B cell (primary cell): ENCODE measurements at regions of chr9 and their contacts with region 1.

Region 1: DNA sequence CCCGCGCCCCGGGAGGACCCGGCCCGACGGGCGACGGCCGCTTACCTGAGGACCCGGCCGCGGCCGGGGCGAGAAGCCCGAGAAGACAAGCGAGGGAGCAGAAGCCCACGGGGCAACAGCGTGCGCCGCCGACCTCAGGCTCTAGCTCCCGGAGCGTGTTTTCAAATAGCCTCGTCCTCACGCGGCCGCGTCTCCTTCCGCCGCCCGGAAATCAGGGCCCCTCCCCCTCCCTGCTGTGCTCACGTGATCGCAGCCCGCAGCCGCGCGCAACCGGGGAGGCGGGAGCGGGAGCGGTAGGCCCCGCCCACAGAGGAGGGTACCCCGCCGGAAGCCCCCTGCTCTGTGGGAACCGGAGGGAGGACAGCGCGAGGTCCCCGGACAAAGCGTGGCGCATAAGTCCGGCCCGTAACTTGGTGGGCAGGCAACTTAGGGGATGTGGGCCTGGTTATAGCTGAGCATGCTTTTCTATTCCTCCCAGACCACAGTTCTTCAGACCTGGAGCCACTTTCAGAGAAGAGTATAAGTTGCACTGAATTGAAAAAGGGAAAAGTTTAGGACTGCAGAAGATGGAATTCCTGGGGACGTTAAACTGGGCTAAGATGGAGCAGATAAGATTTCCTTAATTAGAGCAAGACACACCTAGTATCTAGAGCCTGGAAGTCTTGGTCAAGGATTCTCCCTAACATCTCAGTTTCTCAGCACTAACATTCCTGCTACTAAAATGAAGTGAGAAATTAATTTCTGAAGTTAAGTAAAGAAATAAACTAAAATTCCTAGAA is at the start of gene TEX10:
- DNase-seq: peak; percentile 93
- ATAC-seq: peak; percentile 93
- H3K4me3 ChIP-seq: peak within 1 kb of the TSS; percentile 53 to 94 (median 92)
- H3K4me3 Mint-ChIP-seq: peak within 1 kb of the TSS; percentile 93
- H3K27ac ChIP-seq: peak within 1 kb of the TSS; percentile 58 to 90
- H3K27ac Mint-ChIP-seq: peak within 1 kb of the TSS; percentile 83
- H3K4me1 ChIP-seq: peaks cover 35% of the 10 kb centered on the region in 2 donors
- H3K4me1 Mint-ChIP-seq: peaks cover 69% of the 10 kb centered on the region
- H3K27me3 ChIP-seq: no peaks in the 10 kb centered on the region
- H3K27me3 Mint-ChIP-seq: no peaks in the 10 kb centered on the region
- CTCF ChIP-seq: no peak
- total RNA-seq, gene TEX10: 24.9 and 27.6 TPM in 2 replicates

Region 2: DNA sequence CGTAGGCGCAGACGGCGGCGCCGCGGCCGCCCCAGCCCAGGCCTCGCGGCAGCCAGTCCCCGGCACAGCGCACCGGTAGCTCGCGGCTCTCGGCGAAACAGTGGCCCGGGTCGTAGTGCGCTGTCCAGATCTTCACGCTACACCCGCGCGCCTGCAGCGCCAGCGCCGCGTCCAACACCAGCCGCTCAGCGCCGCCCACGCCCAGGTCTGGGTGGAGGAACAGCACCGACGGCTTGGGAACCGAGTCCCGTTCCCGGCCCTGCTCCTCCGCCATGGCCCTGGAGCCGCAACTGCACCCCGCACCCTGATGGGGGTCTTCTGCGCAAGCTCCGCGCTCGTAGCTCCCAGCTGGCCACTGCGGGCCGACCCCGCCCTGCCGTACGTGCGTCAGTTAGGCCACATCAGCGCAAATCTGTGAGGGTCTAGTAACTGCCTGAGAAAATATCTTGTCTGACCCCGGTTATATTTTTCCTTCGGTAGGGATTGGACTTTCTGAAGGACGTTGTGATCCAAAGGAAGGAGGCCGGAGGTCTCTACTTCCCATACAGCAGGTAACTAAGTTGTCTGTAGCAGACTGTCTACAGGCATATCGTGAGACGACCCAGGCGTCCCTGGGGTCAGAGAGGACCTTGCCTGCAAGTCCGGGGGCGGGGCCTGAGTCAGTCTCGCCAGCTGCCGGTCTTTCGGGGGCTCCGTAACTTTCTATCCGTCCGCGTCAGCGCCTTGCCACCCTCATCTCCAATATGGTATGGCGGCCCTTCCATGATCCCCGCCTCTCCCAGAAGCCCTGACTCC is 1131.1 kb before region 1 on chr9 and contains the starts of genes ALG2 and SEC61B:
- CTCF ChIA-PET with region 1: no interaction called
- POLR2A ChIA-PET with region 1: no interaction called
- intact Hi-C with region 1: loop called (anchors 5 kb)
- DNase-seq: peak; percentile 98
- ATAC-seq: peak; percentile 89
- H3K4me3 ChIP-seq: peak within 1 kb of the TSS; percentile 88 to 96 (median 90)
- H3K4me3 Mint-ChIP-seq: peak within 1 kb of the TSS; percentile 95
- H3K27ac ChIP-seq: peak within 1 kb of the TSS; percentile 98 to 99
- H3K27ac Mint-ChIP-seq: peak within 1 kb of the TSS; percentile 100
- H3K4me1 ChIP-seq: peaks cover 30 to 43% of the 10 kb centered on the region in 2 donors
- H3K4me1 Mint-ChIP-seq: peaks cover 77% of the 10 kb centered on the region
- H3K27me3 ChIP-seq: no peaks in the 10 kb centered on the region
- H3K27me3 Mint-ChIP-seq: no peaks in the 10 kb centered on the region
- CTCF ChIP-seq: no peak
- total RNA-seq, gene ALG2: 42.6 and 46.3 TPM in 2 replicates
- total RNA-seq, gene SEC61B: 70.2 and 78.2 TPM in 2 replicates

Region 3: GRCh38 chr9:100411472-100412283 is 58.8 kb after region 1 on chr9:
- CTCF ChIA-PET with region 1: no interaction called
- POLR2A ChIA-PET with region 1: no interaction called
- intact Hi-C with region 1: loop called (anchors 1 kb)
- DNase-seq: peak; percentile 88
- ATAC-seq: peak; percentile 99
- H3K4me3 ChIP-seq: peak overlapping the region; percentile 62 to 79 (median 75)
- H3K4me3 Mint-ChIP-seq: peak overlapping the region; percentile 85
- H3K27ac ChIP-seq: no peak overlapping the region
- H3K27ac Mint-ChIP-seq: peak overlapping the region; percentile 57
- H3K4me1 ChIP-seq: peaks cover 8 to 12% of the 10 kb centered on the region in 2 donors
- H3K4me1 Mint-ChIP-seq: peaks cover 14% of the 10 kb centered on the region
- H3K27me3 ChIP-seq: peaks cover 0 to 9% (median 3%) of the 10 kb centered on the region in 4 experiments
- H3K27me3 Mint-ChIP-seq: peaks cover 20% of the 10 kb centered on the region
- CTCF ChIP-seq: no peak

Region 4: DNA sequence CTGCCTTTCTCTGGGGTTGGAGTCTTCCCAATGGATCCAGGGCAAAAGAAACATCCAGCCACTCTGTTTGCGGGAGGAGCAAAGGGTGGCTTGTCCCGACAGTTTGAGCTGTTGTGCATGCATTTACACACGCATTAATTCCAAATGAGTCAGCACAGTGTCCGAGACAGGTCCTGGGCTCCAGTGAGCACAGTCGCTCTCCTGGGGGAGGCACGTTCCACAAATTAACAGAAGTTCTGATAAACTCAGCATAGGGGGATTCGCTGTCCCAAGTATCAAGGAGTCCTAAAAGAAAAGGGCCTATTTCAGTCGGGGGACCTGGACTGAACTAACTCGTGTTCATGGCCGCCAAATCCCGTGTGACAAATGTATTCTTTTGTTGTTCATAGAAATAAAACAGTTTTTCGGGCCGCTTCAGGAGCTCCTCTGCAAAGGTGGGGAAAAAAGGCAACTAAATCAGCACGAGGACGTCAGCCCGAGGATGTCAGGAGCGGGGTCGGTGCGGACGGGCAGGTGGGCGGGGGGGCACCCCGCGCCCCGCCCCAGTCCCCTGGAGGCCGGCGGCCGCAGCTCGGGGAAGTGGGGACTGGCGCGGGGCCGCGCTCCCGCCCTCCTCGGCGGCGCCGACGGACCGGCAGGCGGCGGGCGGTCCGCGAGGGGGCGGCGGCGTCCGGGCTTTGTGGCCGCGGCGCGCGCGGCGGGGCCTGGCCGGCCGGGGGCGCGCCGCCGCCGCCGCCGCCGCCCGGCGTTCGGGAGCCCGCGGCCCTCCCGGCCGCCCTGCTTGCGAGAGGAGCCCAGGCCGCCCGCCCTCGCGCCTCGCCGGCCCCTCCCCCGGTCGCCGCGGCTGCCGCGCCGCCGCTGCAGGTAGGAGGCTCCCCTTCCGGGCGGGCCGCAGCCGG is 73.9 kb after region 1 on chr9 and contains the start of gene MSANTD3:
- CTCF ChIA-PET with region 1: interaction called, 3 read pairs
- POLR2A ChIA-PET with region 1: no interaction called
- intact Hi-C with region 1: loop called (anchors 1 kb)
- DNase-seq: peak; percentile 75
- ATAC-seq: peak; percentile 90
- H3K4me3 ChIP-seq: peak within 1 kb of the TSS; percentile 40 to 77 (median 70)
- H3K4me3 Mint-ChIP-seq: peak within 1 kb of the TSS; percentile 95
- H3K27ac ChIP-seq: peak within 1 kb of the TSS in 1 of 2 donors; percentile 59
- H3K27ac Mint-ChIP-seq: peak within 1 kb of the TSS; percentile 93
- H3K4me1 ChIP-seq: peaks cover 13 to 16% of the 10 kb centered on the region in 2 donors
- H3K4me1 Mint-ChIP-seq: peaks cover 21% of the 10 kb centered on the region
- H3K27me3 ChIP-seq: peaks cover 0 to 2% (median 0%) of the 10 kb centered on the region in 4 experiments
- H3K27me3 Mint-ChIP-seq: peaks cover 2% of the 10 kb centered on the region
- CTCF ChIP-seq: no peak
- total RNA-seq, gene MSANTD3: 12.1 and 13.8 TPM in 2 replicates

Region 5: DNA sequence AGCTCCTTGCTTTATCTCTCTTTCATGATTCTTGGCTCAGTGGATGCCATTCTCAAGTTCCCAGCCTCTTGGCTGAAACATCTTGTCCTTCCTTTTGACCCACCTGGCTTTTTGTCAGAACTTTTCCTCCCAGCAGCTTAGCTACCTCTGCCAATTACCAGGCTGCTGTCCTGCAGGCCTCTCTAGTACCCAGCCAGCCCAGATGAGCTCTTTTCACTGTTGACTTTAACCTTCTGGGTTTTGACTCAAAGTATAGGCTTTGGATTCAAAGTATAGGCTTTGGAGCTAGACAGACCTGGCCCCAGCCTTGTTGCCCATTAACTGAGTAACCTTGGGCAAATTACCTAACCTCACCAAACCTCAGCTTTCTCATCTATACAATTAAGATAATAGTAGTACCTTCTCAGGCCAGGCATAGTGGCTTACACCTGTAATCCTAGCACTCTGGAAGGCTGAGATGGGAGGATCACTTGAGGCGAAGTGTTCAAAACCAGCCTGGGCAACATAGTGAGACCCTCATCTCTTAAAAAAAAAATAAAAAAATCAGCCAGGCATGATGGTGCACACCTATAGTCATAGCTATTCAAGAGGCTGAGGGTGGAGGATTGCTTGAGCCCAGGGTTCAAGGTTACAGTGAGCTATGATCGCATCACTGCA is 113.4 kb after region 1 on chr9:
- CTCF ChIA-PET with region 1: no interaction called
- POLR2A ChIA-PET with region 1: no interaction called
- intact Hi-C with region 1: no loop called
- DNase-seq: no peak
- ATAC-seq: no peak
- H3K4me3 ChIP-seq: no peak overlapping the region
- H3K4me3 Mint-ChIP-seq: no peak overlapping the region
- H3K27ac ChIP-seq: no peak overlapping the region
- H3K27ac Mint-ChIP-seq: no peak overlapping the region
- H3K4me1 ChIP-seq: no peaks in the 10 kb centered on the region
- H3K4me1 Mint-ChIP-seq: no peaks in the 10 kb centered on the region
- H3K27me3 ChIP-seq: peaks cover 0 to 5% (median 0%) of the 10 kb centered on the region in 4 experiments
- H3K27me3 Mint-ChIP-seq: peaks cover 12% of the 10 kb centered on the region
- CTCF ChIP-seq: no peak

Region 6: DNA sequence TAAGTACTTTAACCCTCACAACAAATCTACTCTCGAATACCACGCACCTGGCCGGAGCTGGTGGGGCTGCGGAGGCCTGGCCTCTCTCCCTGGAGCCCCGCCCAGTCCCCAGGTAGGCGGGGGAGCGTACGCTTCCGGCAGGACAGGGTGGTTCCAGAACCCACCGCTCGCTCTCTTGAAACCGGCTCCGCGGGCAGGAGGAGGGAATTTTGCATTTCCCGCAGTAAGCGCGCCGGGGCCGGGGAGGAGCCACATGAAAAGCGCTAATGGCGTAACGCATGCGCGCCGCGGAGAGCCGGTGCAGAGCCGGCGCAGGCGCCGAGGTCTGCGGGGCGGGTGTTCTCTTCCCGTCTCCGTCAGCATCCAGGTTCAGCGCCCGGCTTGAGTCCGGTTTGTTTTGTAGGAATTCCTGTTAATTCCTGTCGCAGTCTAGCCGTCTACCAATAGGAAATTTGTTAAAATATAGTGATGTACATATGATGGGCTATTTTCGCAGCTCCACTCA is 245.8 kb after region 1 on chr9:
- CTCF ChIA-PET with region 1: no interaction called
- POLR2A ChIA-PET with region 1: no interaction called
- intact Hi-C with region 1: loop called (anchors 10 kb)
- DNase-seq: peak; percentile 85
- ATAC-seq: peak; percentile 87
- H3K4me3 ChIP-seq: peak overlapping the region; percentile 49 to 79 (median 61)
- H3K4me3 Mint-ChIP-seq: peak overlapping the region; percentile 76
- H3K27ac ChIP-seq: peak overlapping the region in 1 of 2 donors; percentile 17
- H3K27ac Mint-ChIP-seq: peak overlapping the region; percentile 4
- H3K4me1 ChIP-seq: peaks cover 11 to 13% of the 10 kb centered on the region in 2 donors
- H3K4me1 Mint-ChIP-seq: peaks cover 23% of the 10 kb centered on the region
- H3K27me3 ChIP-seq: no peaks in the 10 kb centered on the region
- H3K27me3 Mint-ChIP-seq: no peaks in the 10 kb centered on the region
- CTCF ChIP-seq: no peak

Region 7: DNA sequence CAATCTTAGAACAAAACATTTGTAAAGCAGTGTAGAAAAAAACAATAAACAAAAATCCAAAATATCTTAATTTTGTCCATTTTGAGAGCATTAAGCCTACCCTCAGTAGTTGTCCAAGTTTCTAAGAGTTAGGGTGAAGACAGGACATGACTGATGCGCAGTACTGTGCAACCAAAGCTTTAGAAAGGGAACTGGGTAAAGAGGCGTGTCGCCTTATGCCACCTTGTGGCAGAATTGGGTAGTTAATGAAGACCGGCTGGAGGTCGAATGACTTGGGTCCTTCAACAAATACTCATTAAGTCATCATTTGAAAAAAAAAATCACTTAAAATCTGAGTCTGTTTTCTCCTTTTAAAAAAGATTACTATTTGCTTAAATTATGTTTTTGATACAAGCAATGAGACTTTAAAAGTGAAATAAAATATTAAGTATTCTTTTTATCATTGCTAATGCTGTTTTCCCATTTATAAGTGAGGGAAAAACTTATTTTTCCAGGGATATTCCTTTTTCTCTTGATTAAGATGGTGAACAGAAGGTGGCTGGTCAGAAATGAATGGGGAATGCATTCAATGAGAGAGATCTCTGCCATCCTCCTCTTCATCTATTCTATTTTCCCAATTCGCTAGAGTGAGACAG is 1177.3 kb after region 1 on chr9:
- CTCF ChIA-PET with region 1: no interaction called
- POLR2A ChIA-PET with region 1: no interaction called
- intact Hi-C with region 1: loop called (anchors 5 kb)
- DNase-seq: peak; percentile 85
- ATAC-seq: peak; percentile 41
- H3K4me3 ChIP-seq: no peak overlapping the region
- H3K4me3 Mint-ChIP-seq: no peak overlapping the region
- H3K27ac ChIP-seq: no peak overlapping the region
- H3K27ac Mint-ChIP-seq: no peak overlapping the region
- H3K4me1 ChIP-seq: peaks cover 9 to 12% of the 10 kb centered on the region in 2 donors
- H3K4me1 Mint-ChIP-seq: peaks cover 18% of the 10 kb centered on the region
- H3K27me3 ChIP-seq: peaks cover 0 to 3% (median 3%) of the 10 kb centered on the region in 4 experiments
- H3K27me3 Mint-ChIP-seq: peaks cover 8% of the 10 kb centered on the region
- CTCF ChIP-seq: peak; percentile 91